ENCODE measurements at regions of chr19 and their contacts with region 1.

Region 1: DNA sequence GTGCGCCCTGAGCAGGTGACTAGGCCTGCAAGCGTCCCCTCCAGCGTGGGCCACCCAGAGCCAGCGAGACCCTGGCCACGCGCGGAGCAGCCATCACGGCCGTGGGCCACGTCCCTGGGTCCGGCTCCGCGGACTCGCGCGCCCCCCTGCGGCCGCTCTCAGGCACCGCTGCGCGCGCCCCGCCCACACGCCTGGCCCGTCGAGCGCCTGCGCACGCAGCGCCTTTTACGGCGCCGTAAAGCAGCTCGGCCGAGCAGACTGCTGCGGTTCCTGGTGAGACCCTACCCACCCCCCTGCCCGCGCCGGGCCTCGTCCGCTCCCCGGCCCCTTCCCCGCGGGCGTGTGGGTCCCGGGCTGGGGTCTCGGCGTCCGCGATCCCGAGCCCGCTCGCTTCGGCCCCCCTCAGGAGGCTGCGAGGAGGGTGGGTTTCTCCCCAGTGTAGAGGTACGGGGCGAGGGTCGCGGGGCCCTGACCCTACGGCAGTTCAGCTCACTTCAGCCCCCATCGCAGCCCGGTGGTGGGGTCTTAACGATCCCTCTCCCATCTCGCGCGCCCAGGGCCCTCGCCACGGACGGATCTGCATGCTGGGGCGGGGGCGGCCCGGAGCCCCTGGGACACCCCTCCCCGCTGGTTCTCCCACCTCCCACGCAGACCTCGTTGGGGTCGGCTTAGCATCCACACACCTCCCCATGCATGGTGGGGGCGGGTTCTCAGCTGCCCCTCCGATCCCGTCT is at the start of gene TRAPPC5:
- DNase-seq: peak; percentile 74
- H3K4me3 Mint-ChIP-seq: peak within 1 kb of the TSS; percentile 84
- H3K27ac Mint-ChIP-seq: peak within 1 kb of the TSS; percentile 66
- H3K4me1 Mint-ChIP-seq: peaks cover 14% of the 10 kb centered on the region
- H3K27me3 Mint-ChIP-seq: no peaks in the 10 kb centered on the region
- CTCF ChIP-seq: peak; percentile 96
- total RNA-seq, gene TRAPPC5: 123 and 155 TPM in 2 replicates

Region 2: GRCh38 chr19:7349961-7350711 is 330.6 kb before region 1 on chr19:
- CTCF ChIA-PET with region 1: interaction called, 4 read pairs
- POLR2A ChIA-PET with region 1: interaction called, 4 read pairs
- intact Hi-C with region 1: loop called (anchors 1 kb)
- DNase-seq: no peak
- H3K4me3 Mint-ChIP-seq: no peak overlapping the region
- H3K27ac Mint-ChIP-seq: no peak overlapping the region
- H3K4me1 Mint-ChIP-seq: no peaks in the 10 kb centered on the region
- H3K27me3 Mint-ChIP-seq: peaks cover 19% of the 10 kb centered on the region
- CTCF ChIP-seq: no peak

Region 3: GRCh38 chr19:7570761-7571160 is 110.0 kb before region 1 on chr19:
- CTCF ChIA-PET with region 1: interaction called, 26 read pairs
- POLR2A ChIA-PET with region 1: interaction called, 19 read pairs
- intact Hi-C with region 1: loop called (anchors 1 kb)
- DNase-seq: no peak
- H3K4me3 Mint-ChIP-seq: no peak overlapping the region
- H3K27ac Mint-ChIP-seq: no peak overlapping the region
- H3K4me1 Mint-ChIP-seq: peaks cover 9% of the 10 kb centered on the region
- H3K27me3 Mint-ChIP-seq: no peaks in the 10 kb centered on the region
- CTCF ChIP-seq: no peak

Region 4: GRCh38 chr19:7636691-7637373 is 43.9 kb before region 1 on chr19 and contains the start of gene STXBP2:
- CTCF ChIA-PET with region 1: interaction called, 10 read pairs
- POLR2A ChIA-PET with region 1: interaction called, 3 read pairs
- intact Hi-C with region 1: no loop called
- DNase-seq: peak; percentile 80
- H3K4me3 Mint-ChIP-seq: peak within 1 kb of the TSS; percentile 80
- H3K27ac Mint-ChIP-seq: peak within 1 kb of the TSS; percentile 90
- H3K4me1 Mint-ChIP-seq: peaks cover 5% of the 10 kb centered on the region
- H3K27me3 Mint-ChIP-seq: no peaks in the 10 kb centered on the region
- CTCF ChIP-seq: no peak
- total RNA-seq, gene STXBP2: 94.4 and 102 TPM in 2 replicates

Region 5: GRCh38 chr19:7652061-7652641 is 28.6 kb before region 1 on chr19:
- CTCF ChIA-PET with region 1: interaction called, 31 read pairs
- POLR2A ChIA-PET with region 1: interaction called, 3 read pairs
- intact Hi-C with region 1: loop called (anchors 1 kb)
- DNase-seq: peak; percentile 94
- H3K4me3 Mint-ChIP-seq: peak overlapping the region; percentile 66
- H3K27ac Mint-ChIP-seq: no peak overlapping the region
- H3K4me1 Mint-ChIP-seq: peaks cover 6% of the 10 kb centered on the region
- H3K27me3 Mint-ChIP-seq: no peaks in the 10 kb centered on the region
- CTCF ChIP-seq: peak; percentile 91

Measured in MCF 10A (cell line).